IMR-90 (cell line): ENCODE measurements at regions of chr12 and their contacts with region 1.

Region 1: GRCh38 chr12:89542912-89543592 is 17.2 kb upstream of the POC1B start:
- DNase-seq: peak; percentile 83
- ATAC-seq: peak; percentile 94
- H3K4me3 ChIP-seq: no peak overlapping the region
- H3K27ac ChIP-seq: no peak overlapping the region
- H3K4me1 ChIP-seq: no peaks in the 10 kb centered on the region
- H3K27me3 ChIP-seq: no peaks in the 10 kb centered on the region
- CTCF ChIP-seq: peak; percentile 96
- POLR2A ChIP-seq: no peak
- RAD21 ChIP-seq: peak; percentile 97

Region 2: DNA sequence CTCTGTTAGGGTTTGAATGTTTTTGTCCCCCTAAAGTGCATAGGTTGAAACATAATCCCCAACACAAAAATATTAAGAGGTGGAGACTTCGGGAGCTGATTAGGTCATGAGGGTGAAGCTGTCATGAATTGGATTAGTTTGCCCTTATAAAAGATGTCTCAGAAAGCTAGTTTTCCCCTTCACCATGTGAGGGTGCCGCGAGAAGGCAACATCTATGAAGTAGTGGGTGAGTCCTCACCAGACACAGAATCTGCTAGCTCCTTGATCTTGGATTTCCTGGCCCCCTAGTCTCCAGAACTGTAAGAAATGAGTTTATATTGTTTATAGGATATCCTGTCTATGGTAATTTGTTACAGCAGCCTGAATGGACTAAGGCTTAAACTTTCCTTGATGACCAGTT is 467.0 kb after region 1 on chr12:
- CTCF ChIA-PET with region 1: no interaction called
- POLR2A ChIA-PET with region 1: no interaction called
- dilution Hi-C with region 1: no loop called
- in situ Hi-C with region 1: no loop called
- intact Hi-C with region 1: loop called (anchors 1 kb)
- DNase-seq: peak; percentile 31
- ATAC-seq: no peak
- H3K4me3 ChIP-seq: no peak overlapping the region
- H3K27ac ChIP-seq: no peak overlapping the region
- H3K4me1 ChIP-seq: no peaks in the 10 kb centered on the region
- H3K27me3 ChIP-seq: no peaks in the 10 kb centered on the region
- CTCF ChIP-seq: peak; percentile 35
- POLR2A ChIP-seq: no peak
- RAD21 ChIP-seq: peak; percentile 52

Region 3: DNA sequence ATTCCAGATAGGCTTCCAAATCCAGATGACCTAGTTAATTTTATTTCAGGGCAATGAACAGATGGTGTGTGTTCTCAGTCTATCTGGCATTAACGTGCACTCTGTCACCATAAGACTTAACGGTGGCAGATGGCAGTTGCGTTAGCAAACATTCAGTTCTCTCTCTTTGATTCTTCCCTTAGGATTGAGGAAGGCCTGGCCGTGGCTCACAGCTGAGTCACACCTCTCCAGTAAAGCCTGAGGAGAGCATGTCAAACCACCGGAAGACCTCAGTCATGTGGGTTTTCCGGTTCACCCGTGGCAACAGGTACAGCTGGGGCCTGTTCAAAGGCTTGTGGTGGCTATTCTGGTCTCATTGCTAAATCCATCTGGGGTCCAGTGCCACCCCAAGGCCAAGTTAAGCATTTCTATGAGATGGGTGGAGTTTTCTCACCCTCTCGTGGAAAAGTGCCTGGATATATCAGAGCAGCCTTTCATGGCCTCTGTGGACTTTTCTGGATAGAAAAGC is 710.7 kb after region 1 on chr12:
- CTCF ChIA-PET with region 1: no interaction called
- POLR2A ChIA-PET with region 1: no interaction called
- dilution Hi-C with region 1: no loop called
- in situ Hi-C with region 1: no loop called
- intact Hi-C with region 1: loop called (anchors 5 kb)
- DNase-seq: peak; percentile 92
- ATAC-seq: peak; percentile 87
- H3K4me3 ChIP-seq: no peak overlapping the region
- H3K27ac ChIP-seq: no peak overlapping the region
- H3K4me1 ChIP-seq: no peaks in the 10 kb centered on the region; the same call in 1 of the 2 replicates
- H3K27me3 ChIP-seq: no peaks in the 10 kb centered on the region
- CTCF ChIP-seq: peak; percentile 31
- POLR2A ChIP-seq: no peak
- RAD21 ChIP-seq: peak; percentile 43; the same call in 1 of the 2 replicates

Region 4: DNA sequence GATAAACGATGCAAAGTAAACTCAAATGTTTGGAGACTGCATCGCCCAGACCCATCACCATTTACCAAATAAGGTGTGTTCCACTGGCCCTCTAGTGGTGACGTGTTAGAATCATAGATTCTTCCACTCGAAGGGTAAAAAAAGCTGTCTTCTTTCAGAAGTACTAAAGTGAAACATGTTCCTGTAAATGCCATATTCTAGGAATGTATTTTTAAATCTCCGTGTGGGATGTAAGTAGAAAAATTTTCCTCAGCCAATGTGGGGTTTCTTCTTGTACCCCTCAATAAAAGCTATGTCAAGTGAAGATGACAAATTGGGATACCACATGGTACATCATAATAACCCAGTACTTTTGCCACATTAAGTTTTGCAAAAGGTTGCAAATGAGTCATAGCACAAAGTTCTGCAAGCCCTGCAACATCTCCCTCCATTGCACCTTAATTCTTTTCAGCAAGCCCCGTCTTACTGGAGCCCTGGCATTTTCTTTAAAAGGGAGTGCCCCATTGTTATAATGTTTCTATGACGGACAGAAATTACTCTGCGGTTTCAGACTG is 1311.2 kb after region 1 on chr12:
- CTCF ChIA-PET with region 1: no interaction called
- POLR2A ChIA-PET with region 1: no interaction called
- dilution Hi-C with region 1: no loop called
- in situ Hi-C with region 1: no loop called
- intact Hi-C with region 1: loop called (anchors 2 kb)
- DNase-seq: peak; percentile 63
- ATAC-seq: peak; percentile 92
- H3K4me3 ChIP-seq: no peak overlapping the region
- H3K27ac ChIP-seq: no peak overlapping the region
- H3K4me1 ChIP-seq: no peaks in the 10 kb centered on the region
- H3K27me3 ChIP-seq: no peaks in the 10 kb centered on the region
- CTCF ChIP-seq: peak; percentile 68
- POLR2A ChIP-seq: no peak
- RAD21 ChIP-seq: peak; percentile 58

Region 5: GRCh38 chr12:90940872-90941499 is 1397.9 kb after region 1 on chr12:
- CTCF ChIA-PET with region 1: interaction called, 9 read pairs
- POLR2A ChIA-PET with region 1: no interaction called
- dilution Hi-C with region 1: no loop called
- in situ Hi-C with region 1: loop called (anchors 10 kb)
- intact Hi-C with region 1: loop called (anchors 2 kb)
- DNase-seq: peak; percentile 76
- ATAC-seq: peak; percentile 84
- H3K4me3 ChIP-seq: no peak overlapping the region
- H3K27ac ChIP-seq: no peak overlapping the region
- H3K4me1 ChIP-seq: peaks cover 4% of the 10 kb centered on the region; the same call in 1 of the 2 replicates
- H3K27me3 ChIP-seq: no peaks in the 10 kb centered on the region
- CTCF ChIP-seq: peak; percentile 83
- POLR2A ChIP-seq: no peak
- RAD21 ChIP-seq: peak; percentile 82